ENCODE measurements at regions of chr16 and their contacts with region 1.

Region 1: GRCh38 chr16:788394-789126 is at the start of gene CHTF18:
- DNase-seq: peak; percentile 91
- H3K4me3 ChIP-seq: peak within 1 kb of the TSS; percentile 75 to 92 (median 76)
- H3K27ac ChIP-seq: peak within 1 kb of the TSS; percentile 38
- H3K4me1 ChIP-seq: peaks cover 13% of the 10 kb centered on the region
- H3K27me3 ChIP-seq: no peaks in the 10 kb centered on the region
- CTCF ChIP-seq: no peak
- POLR2A ChIP-seq: no peak
- total RNA-seq, gene CHTF18: 58.6 and 69.5 TPM in 2 replicates

Region 2: GRCh38 chr16:714558-715476 is 73.7 kb before region 1 on chr16 and contains the start of gene METRN:
- CTCF ChIA-PET with region 1: interaction called, 67 read pairs
- POLR2A ChIA-PET with region 1: no interaction called
- dilution Hi-C with region 1: no loop called
- intact Hi-C with region 1: loop called (anchors 1 kb)
- DNase-seq: peak; percentile 78
- H3K4me3 ChIP-seq: peak within 1 kb of the TSS; percentile 42 to 58 (median 51)
- H3K27ac ChIP-seq: no peak within 1 kb of the TSS
- H3K4me1 ChIP-seq: peaks cover 10% of the 10 kb centered on the region
- H3K27me3 ChIP-seq: no peaks in the 10 kb centered on the region
- CTCF ChIP-seq: no peak
- POLR2A ChIP-seq: no peak
- total RNA-seq, gene METRN: 14.1 and 16.1 TPM in 2 replicates

Region 3: GRCh38 chr16:720990-721764 is 67.4 kb before region 1 on chr16 and contains the start of gene ANTKMT:
- CTCF ChIA-PET with region 1: interaction called, 11 read pairs
- POLR2A ChIA-PET with region 1: no interaction called
- dilution Hi-C with region 1: no loop called
- intact Hi-C with region 1: no loop called
- DNase-seq: peak; percentile 64
- H3K4me3 ChIP-seq: peak within 1 kb of the TSS; percentile 49 to 56 (median 55)
- H3K27ac ChIP-seq: peak within 1 kb of the TSS; percentile 19
- H3K4me1 ChIP-seq: peaks cover 15% of the 10 kb centered on the region
- H3K27me3 ChIP-seq: no peaks in the 10 kb centered on the region
- CTCF ChIP-seq: no peak
- POLR2A ChIP-seq: peak; percentile 80
- total RNA-seq, gene ANTKMT: 26.1 and 29.1 TPM in 2 replicates

Region 4: DNA sequence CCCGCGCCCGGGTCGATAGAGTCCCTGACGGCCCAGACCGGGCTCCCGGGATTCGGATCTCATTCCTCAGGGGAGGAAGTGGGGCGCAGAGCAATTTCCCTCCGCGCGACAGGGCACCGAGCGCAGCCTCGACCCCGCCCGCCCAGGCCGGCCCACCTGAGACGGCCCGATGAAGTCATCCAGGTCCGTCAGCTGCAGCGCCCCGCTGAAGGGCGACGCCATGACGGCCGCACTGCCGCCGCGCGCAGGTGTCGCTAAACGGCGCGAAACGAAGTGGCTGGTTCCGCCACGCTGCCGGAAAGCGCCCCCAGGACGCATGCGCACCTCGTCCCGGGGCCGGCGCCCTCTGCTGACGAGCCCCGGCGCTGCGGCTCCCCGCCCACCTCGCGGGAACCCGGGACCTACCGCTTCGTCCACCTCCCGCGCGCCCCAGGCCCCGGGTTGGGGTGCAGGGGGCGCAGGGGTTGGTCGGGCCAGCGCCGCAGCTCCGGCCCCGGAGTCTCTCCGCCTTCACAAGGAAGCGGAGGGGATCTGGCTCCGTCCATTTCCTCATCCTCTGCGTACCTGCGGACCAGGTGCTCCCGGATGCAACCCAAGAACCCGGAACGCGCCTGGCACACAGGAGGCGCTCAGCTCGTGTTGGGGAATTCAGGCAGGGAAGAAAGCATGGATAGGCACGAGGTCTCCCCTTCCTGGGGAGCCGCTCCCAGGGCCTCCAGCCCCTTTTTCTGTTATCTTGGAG is 47.6 kb before region 1 on chr16 and contains the start of gene CIAO3:
- CTCF ChIA-PET with region 1: interaction called, 7 read pairs
- POLR2A ChIA-PET with region 1: no interaction called
- dilution Hi-C with region 1: no loop called
- intact Hi-C with region 1: loop called (anchors 5 kb)
- DNase-seq: peak; percentile 86
- H3K4me3 ChIP-seq: peak within 1 kb of the TSS; percentile 48 to 82 (median 70)
- H3K27ac ChIP-seq: peak within 1 kb of the TSS; percentile 27
- H3K4me1 ChIP-seq: peaks cover 10% of the 10 kb centered on the region
- H3K27me3 ChIP-seq: no peaks in the 10 kb centered on the region
- CTCF ChIP-seq: peak; percentile 89 to 93
- POLR2A ChIP-seq: peak; percentile 89
- total RNA-seq, gene CIAO3: 31.2 and 33.8 TPM in 2 replicates

Region 5: DNA sequence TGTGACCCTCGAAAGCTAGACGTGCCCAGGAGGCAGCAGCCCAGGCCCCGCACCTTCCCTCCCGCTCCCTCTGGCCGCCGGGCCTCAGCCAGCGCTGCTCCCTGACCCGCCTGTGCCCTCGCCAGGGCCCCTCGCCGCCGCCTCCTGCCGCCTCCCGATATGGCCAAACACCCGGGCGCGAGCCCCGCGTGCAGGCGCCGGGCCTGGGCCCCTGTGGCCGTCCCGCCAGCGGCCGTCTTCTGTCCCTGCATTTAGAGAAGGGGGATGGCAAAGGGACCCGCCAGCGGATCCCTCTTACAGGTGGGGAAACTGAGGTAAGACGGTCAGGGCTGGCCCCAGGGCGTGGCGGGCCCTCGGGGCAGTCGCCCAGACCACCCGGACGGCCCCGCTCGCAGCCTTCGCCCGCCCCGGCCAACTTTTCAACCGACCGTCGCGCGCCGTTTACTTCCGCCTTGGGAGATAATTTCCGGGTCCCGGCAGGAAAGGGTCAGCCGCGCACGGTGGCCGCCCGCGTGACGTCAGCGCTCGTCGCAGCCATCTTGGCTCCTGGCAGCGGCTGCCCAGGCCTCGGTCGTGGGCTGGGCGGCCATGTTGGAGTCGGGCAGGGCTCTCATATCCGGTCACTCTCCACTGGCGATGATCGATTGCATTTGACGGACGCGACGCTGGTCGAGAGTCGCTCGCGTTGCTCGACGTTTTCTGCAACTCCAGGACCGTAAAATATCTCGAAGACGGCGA is 19.0 kb after region 1 on chr16:
- CTCF ChIA-PET with region 1: no interaction called
- POLR2A ChIA-PET with region 1: no interaction called
- dilution Hi-C with region 1: no loop called
- intact Hi-C with region 1: loop called (anchors 1 kb)
- DNase-seq: peak; percentile 91
- H3K4me3 ChIP-seq: peak overlapping the region; percentile 72 to 89 (median 74)
- H3K27ac ChIP-seq: peak overlapping the region; percentile 77
- H3K4me1 ChIP-seq: peaks cover 2% of the 10 kb centered on the region
- H3K27me3 ChIP-seq: peaks cover 0 to 2% of the 10 kb centered on the region in 2 experiments
- CTCF ChIP-seq: no peak
- POLR2A ChIP-seq: peak; percentile 64

Measured in endothelial cell of umbilical vein (primary cell).